Endothelial cell of umbilical vein (primary cell): ENCODE measurements at regions of chr15 and their contacts with region 1.

Region 1: DNA sequence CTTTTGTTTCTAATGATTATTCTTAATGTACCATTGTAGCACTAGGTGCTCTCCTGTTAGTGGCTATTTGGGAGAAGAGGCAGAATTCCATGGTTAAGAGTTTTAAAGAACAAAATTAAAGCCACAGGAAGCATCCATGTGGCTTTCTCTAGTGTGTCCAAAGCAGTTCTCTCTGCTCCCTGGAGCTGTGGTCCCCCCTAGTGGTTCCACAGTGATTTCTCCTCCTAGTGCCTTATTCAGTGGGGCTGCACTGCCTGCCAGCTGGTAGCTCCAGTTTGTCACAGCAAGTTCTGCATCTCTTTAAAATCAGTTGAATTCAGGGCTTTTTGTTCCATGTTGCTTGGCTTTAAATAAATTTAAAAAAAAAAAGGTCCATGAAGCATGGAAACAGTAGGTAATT is 39.6 kb upstream of the FAM98B start:
- DNase-seq: peak; percentile 53
- H3K4me3 ChIP-seq: no peak overlapping the region
- H3K27ac ChIP-seq: no peak overlapping the region
- H3K4me1 ChIP-seq: no peaks in the 10 kb centered on the region
- H3K27me3 ChIP-seq: peaks cover 23 to 31% of the 10 kb centered on the region in 2 experiments
- CTCF ChIP-seq: peak; percentile 49 to 71
- POLR2A ChIP-seq: no peak

Region 2: DNA sequence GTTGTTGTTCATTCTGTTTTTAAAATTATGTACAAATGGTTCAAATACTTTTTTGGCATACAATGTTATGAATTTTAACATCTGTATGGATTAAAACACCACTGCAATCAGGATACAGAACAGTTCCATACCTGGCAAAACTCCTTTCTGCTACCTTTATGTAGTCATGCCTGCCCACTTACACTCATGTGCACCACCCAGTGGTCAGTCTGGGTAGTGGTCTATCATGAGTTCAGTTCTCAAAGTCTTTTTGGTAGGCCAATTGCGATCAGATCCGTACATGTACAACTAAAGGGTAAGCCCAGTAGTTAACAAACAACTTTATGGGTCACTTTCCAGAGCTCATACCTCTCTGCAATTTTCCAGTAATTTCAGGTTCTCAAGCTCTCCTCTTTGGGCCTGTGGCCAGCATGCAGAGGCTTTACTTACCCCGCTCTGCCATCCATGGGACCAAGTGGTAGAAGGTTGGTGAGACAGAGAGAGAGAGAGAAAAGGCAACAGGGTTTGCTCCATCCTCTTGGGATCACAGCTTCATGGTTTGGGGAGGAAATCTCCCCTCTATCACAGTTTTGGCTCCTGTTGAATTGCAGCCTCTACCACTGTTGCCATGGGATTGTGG is 24.3 kb before region 1 on chr15:
- CTCF ChIA-PET with region 1: interaction called, 6 read pairs
- POLR2A ChIA-PET with region 1: no interaction called
- dilution Hi-C with region 1: no loop called
- intact Hi-C with region 1: loop called (anchors 1 kb)
- DNase-seq: peak; percentile 68
- H3K4me3 ChIP-seq: no peak overlapping the region
- H3K27ac ChIP-seq: no peak overlapping the region
- H3K4me1 ChIP-seq: no peaks in the 10 kb centered on the region
- H3K27me3 ChIP-seq: peaks cover 0 to under 1% of the 10 kb centered on the region in 2 experiments
- CTCF ChIP-seq: peak; percentile 80 to 84
- POLR2A ChIP-seq: no peak

Region 3: GRCh38 chr15:38453971-38454695 is 39.8 kb after region 1 on chr15 and contains the start of gene FAM98B:
- CTCF ChIA-PET with region 1: no interaction called
- POLR2A ChIA-PET with region 1: no interaction called
- dilution Hi-C with region 1: no loop called
- intact Hi-C with region 1: no loop called
- DNase-seq: peak; percentile 86
- H3K4me3 ChIP-seq: peak within 1 kb of the TSS; percentile 54 to 96 (median 83)
- H3K27ac ChIP-seq: peak within 1 kb of the TSS; percentile 75
- H3K4me1 ChIP-seq: peaks cover 9% of the 10 kb centered on the region
- H3K27me3 ChIP-seq: peaks cover 2 to 19% of the 10 kb centered on the region in 2 experiments
- CTCF ChIP-seq: no peak
- POLR2A ChIP-seq: peak; percentile 79
- total RNA-seq, gene FAM98B: 22.3 and 33.1 TPM in 2 replicates